ENCODE measurements at regions of chr3 and their contacts with region 1.

Region 1: DNA sequence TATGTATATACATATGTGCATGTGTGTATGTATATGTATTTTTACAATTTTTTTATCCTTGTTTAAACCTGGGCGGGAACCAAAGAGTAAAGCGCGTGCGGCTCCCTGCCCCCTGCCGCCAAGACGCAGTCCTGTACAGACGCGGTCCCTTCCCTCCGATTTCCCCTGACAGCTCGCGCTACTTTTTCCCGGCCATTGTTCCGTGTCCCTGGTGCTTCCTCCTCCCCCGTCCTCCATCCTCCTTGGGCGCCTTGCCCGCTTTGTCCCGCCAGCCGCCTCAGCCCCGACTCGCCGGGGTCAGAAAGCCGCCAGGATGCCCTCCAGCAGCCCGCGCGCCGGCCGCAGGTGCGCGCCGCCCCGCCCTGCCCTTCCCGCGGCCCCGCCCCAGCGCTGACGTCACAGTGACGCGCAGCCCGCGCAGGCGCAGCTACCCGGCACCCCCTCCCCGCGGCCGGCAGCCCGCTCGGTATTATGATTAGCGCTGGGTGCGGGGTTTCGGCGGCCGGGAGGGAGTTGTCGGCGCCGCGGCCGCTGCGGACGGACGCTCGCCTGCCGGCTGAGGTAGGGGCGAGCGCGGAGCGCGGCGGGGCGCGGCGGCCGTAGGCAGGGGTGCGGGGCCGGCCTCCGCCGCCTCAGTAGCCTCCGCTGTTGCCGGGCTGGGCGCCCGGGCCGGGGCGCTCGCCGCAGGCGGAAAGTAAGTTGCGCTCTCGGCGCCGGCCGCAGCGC is at the start of gene SNRK:
- DNase-seq: peak; percentile 91
- ATAC-seq: peak; percentile 83
- H3K4me3 Mint-ChIP-seq: peak within 1 kb of the TSS; percentile 99
- H3K27ac Mint-ChIP-seq: peak within 1 kb of the TSS; percentile 97
- H3K4me1 Mint-ChIP-seq: peaks cover 35% of the 10 kb centered on the region
- H3K27me3 Mint-ChIP-seq: peaks cover 2% of the 10 kb centered on the region
- total RNA-seq, gene SNRK: 47.7 to 57.2 TPM

Region 2: DNA sequence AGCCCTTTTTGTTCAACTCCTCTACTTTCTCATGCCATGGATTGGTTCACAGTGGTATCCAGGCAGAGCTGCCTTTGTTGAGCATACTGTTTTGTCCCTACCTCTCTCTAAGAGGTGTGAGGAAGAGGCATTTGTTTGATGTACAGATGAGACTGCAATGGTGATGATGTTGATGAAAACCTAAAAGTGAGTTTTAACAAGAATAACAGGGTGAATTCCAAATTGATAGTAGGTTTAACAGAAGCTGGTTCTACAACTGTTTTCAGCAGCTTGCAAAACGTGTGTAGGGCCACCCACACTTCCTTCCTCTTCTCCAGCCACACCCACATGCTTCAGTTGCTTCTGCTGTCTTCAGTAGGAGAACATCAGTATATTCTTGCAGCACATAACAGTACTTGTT is 10.3 kb after region 1 on chr3:
- CTCF ChIA-PET with region 1: interaction called, 21 read pairs
- DNase-seq: peak; percentile 81
- ATAC-seq: peak; percentile 93
- H3K4me3 Mint-ChIP-seq: peak overlapping the region; percentile 74
- H3K27ac Mint-ChIP-seq: peak overlapping the region; percentile 87
- H3K4me1 Mint-ChIP-seq: peaks cover 73% of the 10 kb centered on the region
- H3K27me3 Mint-ChIP-seq: no peaks in the 10 kb centered on the region

Region 3: DNA sequence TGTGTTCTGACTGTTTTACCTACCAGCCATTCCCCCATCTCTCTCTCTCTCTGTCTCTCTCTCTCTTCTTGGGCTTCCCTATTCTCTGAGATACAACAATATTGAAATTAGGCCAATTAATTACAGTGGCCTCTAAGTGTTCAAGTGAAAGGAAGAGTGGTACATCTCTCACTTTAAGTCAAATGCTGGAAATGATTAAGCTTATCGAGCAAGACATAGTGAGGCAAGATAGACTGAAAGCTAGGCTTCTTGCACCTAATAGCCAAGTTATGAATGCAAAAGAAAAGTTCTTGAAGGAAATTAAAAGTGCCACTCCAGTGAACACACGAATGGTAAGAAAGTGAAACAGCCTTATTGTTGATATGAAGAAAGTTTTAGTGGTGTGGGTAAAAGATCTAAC is 21.4 kb after region 1 on chr3:
- CTCF ChIA-PET with region 1: no interaction called
- DNase-seq: no peak
- ATAC-seq: no peak
- H3K4me3 Mint-ChIP-seq: no peak overlapping the region
- H3K27ac Mint-ChIP-seq: no peak overlapping the region
- H3K4me1 Mint-ChIP-seq: peaks cover 56% of the 10 kb centered on the region
- H3K27me3 Mint-ChIP-seq: no peaks in the 10 kb centered on the region

Measured in activated CD8-positive, alpha-beta memory T cell treated with anti-CD3 and anti-CD28 coated beads, Interleukin-2, amount 10 ng/mL, durations not matched to agents 7 days and 5 days (primary cell).